Heart right ventricle (tissue), 16 donors: ENCODE measurements at regions of chr3 and their contacts with region 1.

Region 1: DNA sequence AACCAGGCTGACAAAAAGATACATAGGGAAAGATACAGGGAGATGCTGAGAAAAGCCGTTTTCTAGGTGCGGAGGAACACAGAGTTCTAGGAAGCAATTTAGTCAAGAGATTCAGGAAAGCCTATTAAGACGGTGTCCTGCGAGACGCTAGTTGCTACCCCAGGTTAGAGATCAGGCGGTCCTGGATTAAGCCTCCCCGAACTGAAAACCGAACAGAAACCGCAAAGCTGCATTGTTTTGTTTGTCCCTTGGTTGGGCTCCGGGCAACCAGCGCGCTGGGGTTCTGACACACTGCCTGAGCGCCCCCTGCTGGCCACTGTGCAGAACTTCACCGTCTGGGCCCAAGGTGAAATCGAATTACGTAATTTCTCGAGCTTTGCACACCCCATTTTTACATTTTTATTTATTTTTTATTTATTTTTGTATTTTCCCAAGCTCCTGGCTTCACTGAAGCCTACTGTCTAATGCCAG is 37.3 kb upstream of the NDUFB4 start:
- DNase-seq: peak; percentile 86 to 91
- ATAC-seq: peak; percentile 34 to 74 (median 66)
- H3K4me3 ChIP-seq: peak overlapping the region in 9 of 10 donors; percentile 31 to 57 (median 49)
- H3K27ac ChIP-seq: peak overlapping the region; percentile 66 to 97 (median 84)
- H3K4me1 ChIP-seq: peaks cover 16 to 68% (median 45%) of the 10 kb centered on the region in 9 donors
- H3K27me3 ChIP-seq: no peaks in the 10 kb centered on the region
- CTCF ChIP-seq: peak; percentile 97 to 100 (median 99)

Region 2: GRCh38 chr3:119891944-119892721 is 666.7 kb before region 1 on chr3:
- intact Hi-C with region 1: loop called in 1 of 10 experiments (anchors 10 kb)
- DNase-seq: peak in 1 of 2 donors; percentile 60
- ATAC-seq: peak; percentile 61 to 89 (median 84)
- H3K4me3 ChIP-seq: peak overlapping the region in 1 of 10 donors; percentile 6
- H3K27ac ChIP-seq: peak overlapping the region in 1 of 10 donors; percentile 11
- H3K4me1 ChIP-seq: peaks cover 0 to 12% (median 9%) of the 10 kb centered on the region in 9 donors
- H3K27me3 ChIP-seq: no peaks in the 10 kb centered on the region
- CTCF ChIP-seq: peak; percentile 45 to 89 (median 75)

Region 3: GRCh38 chr3:120145498-120146285 is 413.1 kb before region 1 on chr3:
- intact Hi-C with region 1: no loop called
- DNase-seq: no peak
- ATAC-seq: peak in 1 of 8 donors; percentile 15
- H3K4me3 ChIP-seq: no peak overlapping the region
- H3K27ac ChIP-seq: no peak overlapping the region
- H3K4me1 ChIP-seq: peaks cover 0 to 21% (median 17%) of the 10 kb centered on the region in 9 donors
- H3K27me3 ChIP-seq: no peaks in the 10 kb centered on the region
- CTCF ChIP-seq: no peak

Region 4: DNA sequence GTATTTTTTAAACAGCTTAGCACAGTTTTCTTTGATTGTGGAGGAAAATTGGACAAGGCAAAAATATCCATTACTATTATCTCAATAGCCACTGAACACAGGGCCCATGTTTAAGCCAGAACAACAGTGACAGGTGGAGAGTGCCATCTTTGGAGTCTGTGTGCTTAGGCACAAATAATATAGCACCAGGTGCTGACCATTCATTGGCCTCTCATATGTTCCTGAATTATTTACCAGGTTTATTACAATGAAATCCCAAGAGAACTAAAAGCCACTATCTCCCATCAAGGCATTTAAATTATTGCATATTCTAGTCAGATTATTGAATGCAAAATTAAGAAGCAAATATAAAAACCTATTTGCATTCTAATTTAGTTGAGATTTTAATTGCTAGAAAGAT is 313.4 kb before region 1 on chr3:
- intact Hi-C with region 1: loop called (anchors 1 to 10 kb)
- DNase-seq: no peak
- ATAC-seq: no peak
- H3K4me3 ChIP-seq: no peak overlapping the region
- H3K27ac ChIP-seq: no peak overlapping the region
- H3K4me1 ChIP-seq: no peaks in the 10 kb centered on the region
- H3K27me3 ChIP-seq: peaks cover 0 to 9% (median 0%) of the 10 kb centered on the region in 7 donors
- CTCF ChIP-seq: no peak

Region 5: GRCh38 chr3:120272286-120272685 is 286.5 kb before region 1 on chr3:
- intact Hi-C with region 1: no loop called
- DNase-seq: no peak
- ATAC-seq: no peak
- H3K4me3 ChIP-seq: no peak overlapping the region
- H3K27ac ChIP-seq: no peak overlapping the region
- H3K4me1 ChIP-seq: no peaks in the 10 kb centered on the region
- H3K27me3 ChIP-seq: no peaks in the 10 kb centered on the region
- CTCF ChIP-seq: no peak

Region 6: DNA sequence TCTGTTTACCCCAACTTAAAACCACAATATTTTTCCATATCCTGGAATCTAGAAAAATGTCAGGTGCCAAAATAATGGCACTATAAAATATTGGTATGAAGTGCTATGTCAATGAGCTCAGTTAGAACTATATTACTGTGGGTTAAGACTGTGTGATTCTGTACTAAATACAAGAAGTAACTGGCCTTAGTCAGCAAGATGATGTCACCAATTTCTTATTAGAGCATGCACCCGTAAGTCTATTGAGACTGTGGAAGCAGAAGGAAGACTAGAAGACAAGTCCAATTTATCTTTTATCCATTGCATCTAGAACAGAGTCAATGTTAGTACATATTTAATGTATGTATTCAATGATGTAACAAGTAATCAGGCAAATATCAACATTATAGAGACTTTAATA is 234.6 kb before region 1 on chr3:
- intact Hi-C with region 1: no loop called
- DNase-seq: no peak
- ATAC-seq: no peak
- H3K4me3 ChIP-seq: no peak overlapping the region
- H3K27ac ChIP-seq: no peak overlapping the region
- H3K4me1 ChIP-seq: no peaks in the 10 kb centered on the region
- H3K27me3 ChIP-seq: no peaks in the 10 kb centered on the region
- CTCF ChIP-seq: no peak

Region 7: DNA sequence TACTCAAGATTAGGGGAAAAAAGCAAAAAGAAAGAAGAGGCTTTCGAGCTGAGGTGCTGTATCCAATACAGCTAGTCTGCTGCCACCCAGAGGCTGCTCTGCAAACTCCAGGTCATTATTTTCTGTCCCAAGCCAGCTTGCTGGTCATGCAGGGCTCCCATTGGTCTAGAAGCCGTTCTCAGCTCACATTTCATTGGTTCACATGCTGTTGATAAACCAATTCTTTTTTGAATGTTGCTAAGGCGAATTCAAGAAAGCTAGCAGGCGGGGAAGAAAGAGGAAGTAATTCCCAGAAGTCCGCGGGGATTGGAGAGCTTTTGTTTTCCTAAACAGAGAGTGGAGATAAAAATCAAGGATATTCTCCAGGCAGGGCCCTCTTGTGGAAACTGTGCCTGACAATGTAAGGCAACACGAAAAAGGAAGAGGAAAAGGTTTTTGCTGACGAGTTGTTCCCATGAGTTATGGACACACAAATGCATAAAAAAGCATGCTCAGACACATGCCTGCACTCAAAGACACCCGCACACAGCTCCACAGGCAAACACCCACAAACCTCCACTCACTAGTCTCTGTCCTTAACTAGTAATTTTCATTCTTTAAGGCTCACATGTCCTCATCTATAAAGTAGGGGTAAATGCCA is 141.4 kb before region 1 on chr3:
- intact Hi-C with region 1: loop called in 9 of 10 experiments (anchors 1 to 5 kb)
- DNase-seq: peak; percentile 84 to 96
- ATAC-seq: peak; percentile 31 to 87 (median 79)
- H3K4me3 ChIP-seq: peak overlapping the region in 6 of 10 donors; percentile 27 to 38 (median 35)
- H3K27ac ChIP-seq: peak overlapping the region; percentile 42 to 89 (median 84)
- H3K4me1 ChIP-seq: peaks cover 18 to 75% (median 68%) of the 10 kb centered on the region in 9 donors
- H3K27me3 ChIP-seq: no peaks in the 10 kb centered on the region
- CTCF ChIP-seq: peak; percentile 75 to 95 (median 89)

Region 8: GRCh38 chr3:120450600-120451271 is 108.1 kb before region 1 on chr3 and contains the start of gene FSTL1:
- intact Hi-C with region 1: loop called in 1 of 10 experiments (anchors 2 kb)
- DNase-seq: peak; percentile 73 to 74
- ATAC-seq: peak; percentile 78 to 89 (median 84)
- H3K4me3 ChIP-seq: peak within 1 kb of the TSS; percentile 75 to 99 (median 92)
- H3K27ac ChIP-seq: peak within 1 kb of the TSS; percentile 86 to 99 (median 96)
- H3K4me1 ChIP-seq: peaks cover 6 to 48% (median 40%) of the 10 kb centered on the region in 9 donors
- H3K27me3 ChIP-seq: peaks cover 0 to 38% (median 0%) of the 10 kb centered on the region in 7 donors
- CTCF ChIP-seq: no peak
- total RNA-seq, gene FSTL1: 100 to 346 (median 213) TPM

Region 9: GRCh38 chr3:120596116-120596852 is 37.5 kb after region 1 on chr3 and contains the start of gene NDUFB4:
- intact Hi-C with region 1: loop called in 3 of 10 experiments (anchors 2 kb)
- DNase-seq: peak; percentile 97 to 99
- ATAC-seq: peak; percentile 99 to 100 (median 100)
- H3K4me3 ChIP-seq: peak within 1 kb of the TSS; percentile 55 to 99 (median 91)
- H3K27ac ChIP-seq: peak within 1 kb of the TSS; percentile 82 to 99 (median 95)
- H3K4me1 ChIP-seq: peaks cover 9 to 50% (median 39%) of the 10 kb centered on the region in 9 donors
- H3K27me3 ChIP-seq: no peaks in the 10 kb centered on the region
- CTCF ChIP-seq: no peak
- total RNA-seq, gene NDUFB4: 347 to 581 (median 535) TPM